CD8-positive, alpha-beta T cell (primary cell): ENCODE measurements at regions of chr1 and their contacts with region 1.

Region 1: GRCh38 chr1:89762779-89763648 is 57.8 kb upstream of the LRRC8D start:
- DNase-seq: peak; percentile 80 to 93 (median 88)
- ATAC-seq: peak; percentile 100
- H3K4me3 ChIP-seq: peak overlapping the region; percentile 54 to 59
- H3K4me3 Mint-ChIP-seq: peak overlapping the region; percentile 89
- H3K27ac ChIP-seq: peak overlapping the region; percentile 27 to 46
- H3K27ac Mint-ChIP-seq: peak overlapping the region; percentile 91
- H3K4me1 ChIP-seq: peaks cover 38% of the 10 kb centered on the region
- H3K4me1 Mint-ChIP-seq: peaks cover 50% of the 10 kb centered on the region
- H3K27me3 ChIP-seq: no peaks in the 10 kb centered on the region
- H3K27me3 Mint-ChIP-seq: no peaks in the 10 kb centered on the region
- CTCF ChIP-seq: peak; percentile 84

Region 2: DNA sequence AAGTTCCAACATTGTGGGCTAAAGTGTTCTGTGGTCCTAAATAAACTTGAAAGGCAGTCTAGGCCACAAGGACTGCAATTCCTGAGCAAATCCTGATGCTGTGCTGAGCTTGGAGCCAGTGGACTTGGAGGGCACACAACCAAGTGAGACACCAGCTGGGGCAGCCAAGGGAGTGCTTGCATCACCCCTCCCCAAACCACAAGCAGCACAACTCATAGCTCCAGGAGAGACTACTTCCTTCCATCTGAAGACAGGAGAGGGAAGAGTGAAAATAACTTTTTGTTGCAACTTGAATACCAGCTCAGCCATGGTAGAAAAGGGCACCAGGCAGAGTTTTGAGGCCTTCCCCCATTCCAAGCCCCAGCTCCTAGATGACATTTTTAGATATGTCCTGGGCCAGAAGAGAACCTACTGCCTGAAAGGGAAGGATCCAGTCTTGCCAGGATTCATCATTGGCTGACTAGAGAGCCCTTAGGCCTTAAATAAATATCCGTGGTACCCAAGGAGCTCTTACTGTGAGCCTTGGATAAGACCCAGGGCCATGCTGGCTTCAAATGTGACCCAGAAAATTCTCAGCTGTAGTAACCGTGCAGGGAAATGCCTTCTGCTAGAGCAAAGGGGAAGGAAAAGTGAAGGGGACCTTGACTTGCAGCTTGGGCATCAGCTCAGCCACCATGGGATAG is 273.8 kb before region 1 on chr1:
- CTCF ChIA-PET with region 1: interaction called, 37 read pairs
- POLR2A ChIA-PET with region 1: no interaction called
- intact Hi-C with region 1: loop called in 1 of 2 experiments (anchors 2 kb)
- DNase-seq: no peak
- ATAC-seq: no peak
- H3K4me3 ChIP-seq: no peak overlapping the region
- H3K4me3 Mint-ChIP-seq: no peak overlapping the region
- H3K27ac ChIP-seq: no peak overlapping the region
- H3K27ac Mint-ChIP-seq: no peak overlapping the region
- H3K4me1 ChIP-seq: no peaks in the 10 kb centered on the region
- H3K4me1 Mint-ChIP-seq: peaks cover 14% of the 10 kb centered on the region
- H3K27me3 ChIP-seq: no peaks in the 10 kb centered on the region
- H3K27me3 Mint-ChIP-seq: peaks cover 4% of the 10 kb centered on the region
- CTCF ChIP-seq: no peak

Region 3: DNA sequence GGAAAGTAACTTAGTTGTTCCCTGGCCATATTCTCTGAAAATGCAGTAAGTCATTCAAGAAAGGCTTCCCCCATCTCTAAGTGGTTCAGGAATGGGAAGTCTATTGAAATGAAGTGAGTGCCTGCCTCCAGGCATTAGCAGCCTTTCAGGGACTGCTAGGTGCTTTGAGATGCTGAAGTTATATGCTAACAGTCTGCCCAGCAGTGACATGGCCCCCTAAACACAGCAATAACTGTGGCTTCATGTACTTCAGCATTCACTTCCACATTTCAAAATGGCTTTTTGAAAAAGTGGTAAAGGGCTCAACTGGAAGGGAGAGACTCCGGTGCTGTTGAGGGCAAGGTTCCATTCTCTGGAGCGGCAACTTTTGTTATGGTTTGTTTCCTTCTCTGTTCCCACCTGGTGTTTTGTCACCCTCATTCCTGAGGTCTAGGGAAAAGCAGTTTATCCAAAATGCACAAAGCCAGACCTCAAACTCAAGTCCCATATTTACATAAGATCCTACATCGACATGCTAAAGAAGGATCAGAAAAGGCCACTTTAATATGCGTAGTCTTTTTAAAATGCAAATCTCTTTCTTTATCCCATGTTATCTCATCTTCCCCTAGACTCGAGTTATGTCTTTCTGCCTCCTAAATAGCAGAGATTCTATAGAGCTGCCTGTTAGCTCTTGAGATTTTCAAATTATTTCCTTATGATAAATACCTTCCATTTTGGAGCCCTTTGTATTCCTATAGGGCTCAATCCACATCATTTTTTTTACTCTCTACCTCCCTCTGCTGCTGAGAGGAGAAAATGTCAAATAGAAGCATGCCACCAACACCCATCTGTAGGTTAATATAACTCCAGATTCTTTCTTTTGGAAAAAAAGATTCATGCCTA is 164.3 kb before region 1 on chr1:
- CTCF ChIA-PET with region 1: interaction called, 78 read pairs
- POLR2A ChIA-PET with region 1: interaction called, 4 read pairs
- intact Hi-C with region 1: loop called (anchors 2 kb)
- DNase-seq: peak in 2 of 9 experiments; percentile 55 to 67
- ATAC-seq: peak; percentile 64
- H3K4me3 ChIP-seq: no peak overlapping the region
- H3K4me3 Mint-ChIP-seq: no peak overlapping the region
- H3K27ac ChIP-seq: no peak overlapping the region
- H3K27ac Mint-ChIP-seq: peak overlapping the region; percentile 66
- H3K4me1 ChIP-seq: peaks cover 49% of the 10 kb centered on the region
- H3K4me1 Mint-ChIP-seq: peaks cover 83% of the 10 kb centered on the region
- H3K27me3 ChIP-seq: no peaks in the 10 kb centered on the region
- H3K27me3 Mint-ChIP-seq: no peaks in the 10 kb centered on the region
- CTCF ChIP-seq: peak; percentile 70

Region 4: DNA sequence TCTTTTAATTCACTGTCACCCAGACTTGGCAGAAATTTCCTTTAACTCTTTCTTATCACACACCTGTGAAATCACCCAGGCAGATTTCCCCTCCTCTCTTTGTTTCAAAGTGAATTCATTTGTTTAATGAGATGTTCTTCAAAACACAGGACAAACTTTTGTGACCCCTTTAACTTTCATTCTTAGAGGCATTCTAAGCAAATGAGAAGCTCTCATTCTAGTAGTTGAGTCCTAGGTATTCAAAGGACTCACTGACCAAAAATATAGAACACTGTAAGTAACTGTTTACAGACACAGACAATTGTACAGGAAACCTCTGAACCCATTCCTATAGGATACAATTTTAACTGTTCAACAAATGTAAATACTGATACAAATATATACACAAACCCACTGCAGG is 113.2 kb before region 1 on chr1:
- CTCF ChIA-PET with region 1: interaction called, 26 read pairs
- POLR2A ChIA-PET with region 1: interaction called, 5 read pairs
- intact Hi-C with region 1: no loop called
- DNase-seq: no peak
- ATAC-seq: no peak
- H3K4me3 ChIP-seq: no peak overlapping the region
- H3K4me3 Mint-ChIP-seq: peak overlapping the region; percentile 9
- H3K27ac ChIP-seq: peak overlapping the region in 1 of 2 experiments; percentile 39
- H3K27ac Mint-ChIP-seq: peak overlapping the region; percentile 73
- H3K4me1 ChIP-seq: peaks cover 54% of the 10 kb centered on the region
- H3K4me1 Mint-ChIP-seq: peaks cover 70% of the 10 kb centered on the region
- H3K27me3 ChIP-seq: no peaks in the 10 kb centered on the region
- H3K27me3 Mint-ChIP-seq: no peaks in the 10 kb centered on the region
- CTCF ChIP-seq: no peak

Region 5: GRCh38 chr1:89692601-89693521 is 70.2 kb before region 1 on chr1:
- CTCF ChIA-PET with region 1: interaction called, 34 read pairs
- POLR2A ChIA-PET with region 1: interaction called, 5 read pairs
- intact Hi-C with region 1: no loop called
- DNase-seq: no peak
- ATAC-seq: no peak
- H3K4me3 ChIP-seq: no peak overlapping the region
- H3K4me3 Mint-ChIP-seq: no peak overlapping the region
- H3K27ac ChIP-seq: peak overlapping the region in 1 of 2 experiments; percentile 41
- H3K27ac Mint-ChIP-seq: peak overlapping the region; percentile 89
- H3K4me1 ChIP-seq: peaks cover 52% of the 10 kb centered on the region
- H3K4me1 Mint-ChIP-seq: peaks cover 83% of the 10 kb centered on the region
- H3K27me3 ChIP-seq: no peaks in the 10 kb centered on the region
- H3K27me3 Mint-ChIP-seq: no peaks in the 10 kb centered on the region
- CTCF ChIP-seq: no peak

Region 6: DNA sequence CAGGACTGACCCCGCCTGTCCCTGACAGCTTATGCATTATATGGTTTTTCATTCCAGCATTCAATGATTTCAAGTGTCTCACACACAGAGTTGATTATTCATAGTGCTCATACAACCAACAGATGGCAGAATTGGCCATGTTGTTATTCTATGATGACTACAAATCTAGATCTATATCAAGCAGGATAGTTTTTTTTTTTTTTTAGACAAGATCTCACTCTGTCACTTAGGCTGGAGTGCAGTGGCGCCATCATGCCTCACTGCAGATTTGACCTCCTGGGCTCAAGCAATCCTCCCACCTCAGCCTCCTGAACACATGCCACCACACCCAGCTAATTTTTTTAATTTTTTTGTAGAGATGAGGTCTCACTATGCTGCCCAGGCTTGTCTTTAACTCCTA is 17.7 kb after region 1 on chr1:
- CTCF ChIA-PET with region 1: interaction called, 27 read pairs
- POLR2A ChIA-PET with region 1: interaction called, 4 read pairs
- intact Hi-C with region 1: no loop called
- DNase-seq: peak in 2 of 9 experiments; percentile 51 to 71
- ATAC-seq: peak; percentile 75
- H3K4me3 ChIP-seq: no peak overlapping the region
- H3K4me3 Mint-ChIP-seq: no peak overlapping the region
- H3K27ac ChIP-seq: no peak overlapping the region
- H3K27ac Mint-ChIP-seq: no peak overlapping the region
- H3K4me1 ChIP-seq: peaks cover 16% of the 10 kb centered on the region
- H3K4me1 Mint-ChIP-seq: peaks cover 21% of the 10 kb centered on the region
- H3K27me3 ChIP-seq: no peaks in the 10 kb centered on the region
- H3K27me3 Mint-ChIP-seq: no peaks in the 10 kb centered on the region
- CTCF ChIP-seq: peak; percentile 48

Region 7: GRCh38 chr1:89865498-89866385 is 102.7 kb after region 1 on chr1:
- CTCF ChIA-PET with region 1: no interaction called
- POLR2A ChIA-PET with region 1: no interaction called
- intact Hi-C with region 1: no loop called
- DNase-seq: no peak
- ATAC-seq: no peak
- H3K4me3 ChIP-seq: no peak overlapping the region
- H3K4me3 Mint-ChIP-seq: no peak overlapping the region
- H3K27ac ChIP-seq: no peak overlapping the region
- H3K27ac Mint-ChIP-seq: peak overlapping the region; percentile 7
- H3K4me1 ChIP-seq: peaks cover 43% of the 10 kb centered on the region
- H3K4me1 Mint-ChIP-seq: peaks cover 85% of the 10 kb centered on the region
- H3K27me3 ChIP-seq: no peaks in the 10 kb centered on the region
- H3K27me3 Mint-ChIP-seq: no peaks in the 10 kb centered on the region
- CTCF ChIP-seq: no peak

Region 8: DNA sequence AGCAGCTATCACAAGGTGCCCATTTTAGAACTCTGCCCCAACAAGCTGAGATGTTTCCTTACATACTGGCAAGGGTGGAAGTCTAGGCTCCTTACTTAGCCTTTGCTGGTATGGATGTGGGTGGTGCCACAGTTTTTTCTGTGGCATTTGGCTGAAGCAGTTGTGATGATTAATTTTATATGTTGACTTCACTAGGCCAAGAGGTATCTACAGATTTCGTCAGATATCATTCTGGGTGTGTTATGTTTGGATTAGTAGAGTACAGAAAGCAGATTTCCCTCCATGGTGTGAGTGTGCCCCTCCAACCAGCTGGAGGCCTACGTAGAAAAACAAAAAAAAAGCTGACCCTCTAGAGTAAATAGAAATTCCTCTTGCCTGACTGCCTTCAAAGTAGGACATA is 637.1 kb after region 1 on chr1:
- CTCF ChIA-PET with region 1: no interaction called
- POLR2A ChIA-PET with region 1: no interaction called
- intact Hi-C with region 1: no loop called
- DNase-seq: no peak
- ATAC-seq: no peak
- H3K4me3 ChIP-seq: no peak overlapping the region
- H3K4me3 Mint-ChIP-seq: no peak overlapping the region
- H3K27ac ChIP-seq: no peak overlapping the region
- H3K27ac Mint-ChIP-seq: no peak overlapping the region
- H3K4me1 ChIP-seq: no peaks in the 10 kb centered on the region
- H3K4me1 Mint-ChIP-seq: no peaks in the 10 kb centered on the region
- H3K27me3 ChIP-seq: peaks cover 0 to 2% of the 10 kb centered on the region in 2 experiments
- H3K27me3 Mint-ChIP-seq: peaks cover 6% of the 10 kb centered on the region
- CTCF ChIP-seq: no peak